WTC11 (cell line): ENCODE measurements at regions of chr22 and their contacts with region 1.

Region 1: DNA sequence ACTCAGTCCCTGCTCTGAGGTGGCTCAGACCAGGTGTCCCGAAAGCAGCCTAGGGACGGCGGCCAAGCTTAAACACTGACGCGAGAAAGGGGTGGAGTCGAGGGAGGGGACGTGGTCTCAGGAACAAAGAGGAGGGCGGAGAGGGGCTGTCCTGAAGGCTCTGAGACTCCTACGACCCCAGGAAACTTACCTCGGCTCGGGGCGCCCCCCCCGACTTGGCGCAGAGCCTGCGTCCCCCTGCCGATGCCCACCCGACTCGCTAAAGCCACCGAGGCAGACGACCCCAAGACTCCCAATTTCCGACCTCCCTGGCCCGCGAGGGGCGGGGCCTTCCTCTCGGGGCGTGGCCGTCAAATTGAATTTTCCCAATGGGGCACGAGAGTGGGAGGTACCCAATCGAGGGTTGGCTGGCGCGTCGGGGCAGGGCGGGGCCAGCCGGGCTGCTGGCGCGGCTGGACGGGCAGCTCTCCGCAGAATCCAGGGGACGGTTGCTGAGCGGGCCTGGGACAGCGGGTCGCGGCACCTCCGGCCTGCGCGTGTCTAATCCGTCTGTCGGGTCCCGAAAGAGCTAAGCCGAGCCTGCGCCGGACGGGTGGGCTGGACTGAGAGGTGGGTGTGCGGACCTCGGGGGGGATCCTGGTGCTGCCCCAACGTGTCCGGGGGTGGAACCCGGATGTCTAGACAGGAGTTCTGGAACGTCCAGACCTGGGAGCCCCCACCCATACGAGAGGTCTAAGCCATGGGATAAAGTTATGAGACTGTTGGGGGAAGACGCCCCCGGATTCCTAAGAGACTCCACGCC is at the start of gene SMTN:
- DNase-seq: peak; percentile 95
- ATAC-seq: peak; percentile 72
- H3K4me3 Mint-ChIP-seq: peak within 1 kb of the TSS; percentile 79
- H3K27ac Mint-ChIP-seq: peak within 1 kb of the TSS; percentile 84
- H3K4me1 Mint-ChIP-seq: peaks cover 40% of the 10 kb centered on the region
- H3K27me3 Mint-ChIP-seq: peaks cover 11% of the 10 kb centered on the region
- CTCF ChIP-seq: no peak
- total RNA-seq, gene SMTN: 28.1 to 34.5 TPM (median 32.8 TPM) in 3 replicates

Region 2: GRCh38 chr22:30947816-30948454 is 133.1 kb before region 1 on chr22:
- CTCF ChIA-PET with region 1: interaction called, 14 read pairs
- POLR2A ChIA-PET with region 1: interaction called, 3 read pairs
- DNase-seq: no peak
- ATAC-seq: no peak
- H3K4me3 Mint-ChIP-seq: no peak overlapping the region
- H3K27ac Mint-ChIP-seq: no peak overlapping the region
- H3K4me1 Mint-ChIP-seq: no peaks in the 10 kb centered on the region
- H3K27me3 Mint-ChIP-seq: no peaks in the 10 kb centered on the region
- CTCF ChIP-seq: no peak

Region 3: DNA sequence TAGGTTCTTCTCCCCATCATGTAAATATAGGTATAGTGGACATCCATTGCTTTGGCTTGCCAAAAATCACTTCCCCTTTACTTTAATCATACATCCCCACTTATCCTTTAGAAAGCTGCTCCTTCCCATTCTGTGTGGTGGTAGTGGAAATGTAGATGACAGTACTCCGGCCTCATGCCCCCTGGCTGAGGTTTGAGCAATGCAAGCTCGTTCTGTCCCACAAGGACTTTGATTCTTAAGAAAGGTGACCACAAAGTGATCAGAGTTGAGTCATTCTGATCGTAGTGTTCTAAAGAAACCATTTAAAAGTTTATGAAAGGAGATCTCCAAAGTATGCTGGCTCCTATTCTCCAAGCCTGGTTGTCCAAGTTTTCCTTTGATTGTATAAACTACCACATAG is 101.1 kb before region 1 on chr22:
- CTCF ChIA-PET with region 1: interaction called, 10 read pairs
- POLR2A ChIA-PET with region 1: no interaction called
- DNase-seq: no peak
- ATAC-seq: peak; percentile 69
- H3K4me3 Mint-ChIP-seq: no peak overlapping the region
- H3K27ac Mint-ChIP-seq: peak overlapping the region; percentile 3; the same call in 1 of the 2 replicates
- H3K4me1 Mint-ChIP-seq: peaks cover 4% of the 10 kb centered on the region
- H3K27me3 Mint-ChIP-seq: peaks cover 6% of the 10 kb centered on the region
- CTCF ChIP-seq: no peak

Region 4: GRCh38 chr22:31098632-31099110 is 17.6 kb after region 1 on chr22:
- CTCF ChIA-PET with region 1: interaction called, 363 read pairs
- POLR2A ChIA-PET with region 1: interaction called, 19 read pairs
- DNase-seq: peak; percentile 80
- ATAC-seq: peak; percentile 90
- H3K4me3 Mint-ChIP-seq: peak overlapping the region; percentile 65
- H3K27ac Mint-ChIP-seq: no peak overlapping the region
- H3K4me1 Mint-ChIP-seq: peaks cover 17% of the 10 kb centered on the region
- H3K27me3 Mint-ChIP-seq: peaks cover 5% of the 10 kb centered on the region; the same call in 1 of the 2 replicates
- CTCF ChIP-seq: no peak

Region 5: DNA sequence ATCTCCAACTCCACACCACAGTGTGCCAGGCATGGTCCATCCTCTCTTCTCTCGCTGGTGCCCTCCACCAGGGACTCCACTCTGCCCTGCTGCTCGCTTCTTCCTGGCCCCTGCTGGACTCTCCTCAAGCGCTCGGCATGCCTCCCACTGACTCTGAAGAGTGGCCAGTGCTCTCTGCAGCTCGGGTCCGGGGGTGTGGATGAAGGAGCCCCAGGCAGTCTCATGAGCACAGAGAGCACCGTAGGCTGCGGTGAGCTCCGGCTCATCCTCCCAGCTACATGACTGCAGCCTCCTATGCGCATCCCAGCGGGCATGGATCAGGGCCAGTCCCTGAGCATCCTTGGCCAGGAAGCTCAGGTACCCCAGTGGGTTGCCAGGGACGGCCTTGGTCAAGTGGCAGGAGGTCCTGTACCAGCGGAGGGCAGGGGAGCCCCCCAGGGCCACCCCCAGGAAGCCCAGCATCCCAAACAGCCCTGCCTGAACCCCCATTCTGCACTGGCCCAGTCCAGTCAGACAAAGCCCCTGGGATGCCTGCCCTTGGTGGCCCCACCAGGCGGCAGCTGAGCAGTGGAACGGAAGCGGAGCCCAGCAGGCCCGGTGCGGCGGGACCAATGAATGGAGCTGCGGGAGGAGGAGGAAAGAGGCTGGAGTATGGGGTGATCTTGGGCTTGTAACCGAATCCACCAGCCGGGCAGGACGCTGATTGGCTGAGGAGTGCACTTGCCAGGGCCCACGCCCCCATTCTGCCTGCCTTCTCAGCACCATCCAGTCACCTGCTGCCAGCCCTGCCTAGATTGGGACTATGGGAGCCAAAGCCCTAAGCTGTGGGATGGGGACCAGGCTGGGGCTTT is 59.0 kb after region 1 on chr22 and contains the start of gene PLA2G3:
- CTCF ChIA-PET with region 1: interaction called, 15 read pairs
- POLR2A ChIA-PET with region 1: interaction called, 4 read pairs
- DNase-seq: peak; percentile 94
- ATAC-seq: peak; percentile 98
- H3K4me3 Mint-ChIP-seq: peak within 1 kb of the TSS; percentile 86
- H3K27ac Mint-ChIP-seq: peak within 1 kb of the TSS; percentile 82
- H3K4me1 Mint-ChIP-seq: peaks cover 22% of the 10 kb centered on the region
- H3K27me3 Mint-ChIP-seq: peaks cover 9% of the 10 kb centered on the region
- CTCF ChIP-seq: no peak
- total RNA-seq, gene PLA2G3: 14.7 to 18.3 TPM (median 15.1 TPM) in 3 replicates

Region 6: GRCh38 chr22:31230871-31231621 is 150.0 kb after region 1 on chr22:
- CTCF ChIA-PET with region 1: no interaction called
- POLR2A ChIA-PET with region 1: no interaction called
- DNase-seq: no peak
- ATAC-seq: no peak
- H3K4me3 Mint-ChIP-seq: no peak overlapping the region
- H3K27ac Mint-ChIP-seq: 0 out of 2 replicates have a peak overlapping the region, but pooled peaks have one; percentile 2
- H3K4me1 Mint-ChIP-seq: peaks cover 13% of the 10 kb centered on the region
- H3K27me3 Mint-ChIP-seq: no peaks in the 10 kb centered on the region
- CTCF ChIP-seq: no peak